IMR-90 (cell line): ENCODE measurements at regions of chr10 and their contacts with region 1.

Region 1: GRCh38 chr10:35462491-35462934 is 126.2 kb downstream of the CCNY start:
- DNase-seq: no peak
- ATAC-seq: no peak
- H3K4me3 ChIP-seq: no peak overlapping the region
- H3K27ac ChIP-seq: no peak overlapping the region
- H3K4me1 ChIP-seq: peaks cover 38% of the 10 kb centered on the region
- H3K27me3 ChIP-seq: no peaks in the 10 kb centered on the region
- CTCF ChIP-seq: no peak
- POLR2A ChIP-seq: no peak
- RAD21 ChIP-seq: no peak

Region 2: GRCh38 chr10:35236739-35237138 is 225.8 kb before region 1 on chr10:
- CTCF ChIA-PET with region 1: no interaction called
- POLR2A ChIA-PET with region 1: no interaction called
- dilution Hi-C with region 1: no loop called
- in situ Hi-C with region 1: no loop called
- intact Hi-C with region 1: no loop called
- DNase-seq: peak; percentile 37
- ATAC-seq: peak; percentile 79
- H3K4me3 ChIP-seq: no peak overlapping the region
- H3K27ac ChIP-seq: no peak overlapping the region
- H3K4me1 ChIP-seq: no peaks in the 10 kb centered on the region
- H3K27me3 ChIP-seq: no peaks in the 10 kb centered on the region
- CTCF ChIP-seq: peak; percentile 48
- POLR2A ChIP-seq: no peak
- RAD21 ChIP-seq: peak; percentile 62

Region 3: DNA sequence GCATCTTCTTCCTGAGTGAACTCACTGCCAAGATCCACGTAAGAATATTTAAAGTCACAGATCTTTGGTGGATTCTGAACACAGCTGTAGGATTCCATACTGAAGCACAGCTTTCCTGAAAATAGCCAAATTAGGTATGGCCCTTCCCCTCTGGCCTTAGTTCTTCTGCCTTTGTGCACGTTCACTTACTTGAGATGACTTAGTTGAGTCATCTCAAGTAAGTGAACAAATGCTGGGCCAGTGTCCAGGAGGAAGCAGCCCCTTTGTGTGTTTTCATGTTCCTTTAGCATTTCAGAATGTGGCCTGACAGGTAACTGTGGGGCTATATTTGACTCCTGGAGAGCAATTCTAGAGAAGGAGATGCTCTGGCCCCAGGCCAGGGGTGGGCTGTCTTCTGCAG is 74.7 kb before region 1 on chr10:
- CTCF ChIA-PET with region 1: no interaction called
- POLR2A ChIA-PET with region 1: no interaction called
- dilution Hi-C with region 1: no loop called
- in situ Hi-C with region 1: no loop called
- intact Hi-C with region 1: loop called (anchors 2 kb)
- DNase-seq: peak; percentile 85
- ATAC-seq: peak; percentile 62
- H3K4me3 ChIP-seq: no peak overlapping the region
- H3K27ac ChIP-seq: no peak overlapping the region
- H3K4me1 ChIP-seq: peaks cover 8% of the 10 kb centered on the region
- H3K27me3 ChIP-seq: no peaks in the 10 kb centered on the region
- CTCF ChIP-seq: no peak
- POLR2A ChIP-seq: no peak
- RAD21 ChIP-seq: no peak

Region 4: DNA sequence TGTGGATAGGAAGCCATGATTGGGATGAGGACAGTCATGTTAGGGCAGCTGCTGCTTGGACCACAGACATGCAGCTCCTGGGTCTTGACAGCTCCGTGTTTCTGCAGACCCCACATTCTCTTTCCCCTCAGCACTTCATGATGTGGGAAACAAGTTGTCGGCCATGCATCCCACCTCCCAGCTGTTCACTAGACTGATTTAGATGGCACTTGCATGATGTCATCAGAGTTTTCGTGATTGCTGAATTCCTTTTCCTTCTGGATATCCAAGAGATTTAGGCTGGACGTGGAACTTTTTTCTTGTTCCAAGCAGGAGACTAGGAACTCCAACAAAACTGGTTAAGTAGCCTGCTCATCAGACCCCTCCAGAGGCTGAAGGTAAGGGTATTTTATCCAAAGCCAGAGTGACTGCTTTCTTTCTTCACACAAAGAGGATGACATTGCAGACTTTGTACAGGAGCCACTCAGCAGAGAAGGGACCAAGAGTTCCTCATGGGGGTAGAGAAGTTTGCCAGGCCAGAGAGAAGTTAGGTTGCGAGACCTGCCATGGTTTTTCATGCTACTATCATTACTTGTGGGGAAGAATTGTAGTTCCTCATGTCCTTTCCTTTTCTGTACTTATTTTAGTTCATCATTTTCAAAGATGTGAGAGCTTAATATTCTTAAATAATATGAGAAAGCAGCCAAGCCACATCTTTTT is 25.0 kb after region 1 on chr10:
- CTCF ChIA-PET with region 1: no interaction called
- POLR2A ChIA-PET with region 1: no interaction called
- dilution Hi-C with region 1: no loop called
- in situ Hi-C with region 1: no loop called
- intact Hi-C with region 1: loop called (anchors 2 kb)
- DNase-seq: peak; percentile 24
- ATAC-seq: no peak; the same call in 1 of the 2 replicates
- H3K4me3 ChIP-seq: no peak overlapping the region
- H3K27ac ChIP-seq: no peak overlapping the region
- H3K4me1 ChIP-seq: peaks cover 5% of the 10 kb centered on the region
- H3K27me3 ChIP-seq: no peaks in the 10 kb centered on the region
- CTCF ChIP-seq: no peak
- POLR2A ChIP-seq: no peak
- RAD21 ChIP-seq: no peak